ENCODE measurements at regions of chr7 and their contacts with region 1.

Region 1: DNA sequence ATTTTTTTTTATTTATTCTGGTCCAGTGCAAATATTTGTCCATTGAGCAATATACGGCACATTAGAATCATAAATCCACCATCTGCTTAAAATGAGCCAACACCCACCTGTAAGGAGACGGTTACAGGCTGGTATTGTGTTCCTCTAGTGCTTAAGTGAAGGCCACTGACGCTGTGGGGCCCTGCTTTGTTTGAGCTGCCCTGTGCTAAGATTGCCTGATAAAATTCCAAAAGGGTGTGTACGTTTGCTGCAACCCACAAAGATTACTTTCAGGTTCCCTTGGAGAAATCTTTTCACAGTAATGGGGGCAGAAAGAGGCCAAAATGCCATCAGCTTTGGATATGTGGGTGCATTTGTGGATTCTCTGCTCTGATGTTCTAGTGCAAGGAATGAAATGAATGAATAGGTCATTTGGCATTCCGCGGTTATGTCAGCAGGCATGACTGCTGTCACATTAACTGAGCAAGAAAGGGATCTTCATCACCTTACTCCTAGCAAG is 34.4 kb downstream of the AGR3 start:
- DNase-seq: peak; percentile 91 to 96
- H3K4me3 ChIP-seq: no peak overlapping the region
- H3K4me3 Mint-ChIP-seq: peak overlapping the region; percentile 64
- H3K27ac Mint-ChIP-seq: peak overlapping the region; percentile 86
- H3K4me1 ChIP-seq: peaks cover 48% of the 10 kb centered on the region
- H3K4me1 Mint-ChIP-seq: peaks cover 39% of the 10 kb centered on the region
- H3K27me3 ChIP-seq: no peaks in the 10 kb centered on the region
- H3K27me3 Mint-ChIP-seq: no peaks in the 10 kb centered on the region
- CTCF ChIP-seq: no peak

Region 2: GRCh38 chr7:16719699-16720098 is 127.7 kb before region 1 on chr7:
- CTCF ChIA-PET with region 1: no interaction called
- POLR2A ChIA-PET with region 1: no interaction called
- intact Hi-C with region 1: loop called (anchors 1 kb)
- DNase-seq: no peak
- H3K4me3 ChIP-seq: no peak overlapping the region
- H3K4me3 Mint-ChIP-seq: peak overlapping the region; percentile 46
- H3K27ac Mint-ChIP-seq: peak overlapping the region; percentile 93
- H3K4me1 ChIP-seq: peaks cover 30% of the 10 kb centered on the region
- H3K4me1 Mint-ChIP-seq: peaks cover 32% of the 10 kb centered on the region
- H3K27me3 ChIP-seq: no peaks in the 10 kb centered on the region
- H3K27me3 Mint-ChIP-seq: no peaks in the 10 kb centered on the region
- CTCF ChIP-seq: no peak

Region 3: GRCh38 chr7:16801111-16801542 is 46.3 kb before region 1 on chr7:
- CTCF ChIA-PET with region 1: interaction called, 8 read pairs
- POLR2A ChIA-PET with region 1: no interaction called
- intact Hi-C with region 1: loop called (anchors 1 kb)
- DNase-seq: peak in 1 of 2 experiments; percentile 44
- H3K4me3 ChIP-seq: no peak overlapping the region
- H3K4me3 Mint-ChIP-seq: peak overlapping the region; percentile 20
- H3K27ac Mint-ChIP-seq: peak overlapping the region; percentile 13
- H3K4me1 ChIP-seq: peaks cover 29% of the 10 kb centered on the region
- H3K4me1 Mint-ChIP-seq: peaks cover 16% of the 10 kb centered on the region
- H3K27me3 ChIP-seq: no peaks in the 10 kb centered on the region
- H3K27me3 Mint-ChIP-seq: no peaks in the 10 kb centered on the region
- CTCF ChIP-seq: peak in 1 of 2 experiments; percentile 54

Region 4: DNA sequence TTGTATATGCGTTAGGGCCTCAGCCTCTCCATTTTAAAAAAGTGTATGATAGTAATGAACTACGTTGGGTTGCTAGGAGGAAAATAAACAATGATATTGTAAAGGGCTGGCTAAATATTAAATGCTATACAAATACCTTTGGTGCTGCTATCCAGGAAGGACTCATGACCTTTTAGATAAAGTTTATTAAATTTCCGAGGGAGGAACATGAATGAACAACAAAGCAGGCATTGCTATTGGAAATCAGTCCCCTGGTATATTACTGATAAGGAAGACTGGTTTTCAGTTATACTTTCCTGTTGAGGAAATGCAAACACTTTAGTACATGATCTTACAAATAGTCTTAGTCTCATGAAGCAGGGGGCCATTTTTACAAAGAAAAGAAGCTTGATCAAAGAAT is 25.4 kb before region 1 on chr7:
- CTCF ChIA-PET with region 1: no interaction called
- POLR2A ChIA-PET with region 1: interaction called, 3 read pairs
- intact Hi-C with region 1: loop called (anchors 1 kb)
- DNase-seq: no peak
- H3K4me3 ChIP-seq: no peak overlapping the region
- H3K4me3 Mint-ChIP-seq: no peak overlapping the region
- H3K27ac Mint-ChIP-seq: peak overlapping the region; percentile 71
- H3K4me1 ChIP-seq: peaks cover 17% of the 10 kb centered on the region
- H3K4me1 Mint-ChIP-seq: peaks cover 26% of the 10 kb centered on the region
- H3K27me3 ChIP-seq: no peaks in the 10 kb centered on the region
- H3K27me3 Mint-ChIP-seq: no peaks in the 10 kb centered on the region
- CTCF ChIP-seq: no peak

Region 5: GRCh38 chr7:16891338-16891737 is 43.9 kb after region 1 on chr7:
- CTCF ChIA-PET with region 1: interaction called, 5 read pairs
- POLR2A ChIA-PET with region 1: interaction called, 3 read pairs
- intact Hi-C with region 1: loop called (anchors 2 kb)
- DNase-seq: peak; percentile 64 to 74
- H3K4me3 ChIP-seq: no peak overlapping the region
- H3K4me3 Mint-ChIP-seq: no peak overlapping the region
- H3K27ac Mint-ChIP-seq: peak overlapping the region; percentile 35
- H3K4me1 ChIP-seq: peaks cover 31% of the 10 kb centered on the region
- H3K4me1 Mint-ChIP-seq: peaks cover 14% of the 10 kb centered on the region
- H3K27me3 ChIP-seq: no peaks in the 10 kb centered on the region
- H3K27me3 Mint-ChIP-seq: no peaks in the 10 kb centered on the region
- CTCF ChIP-seq: peak; percentile 46 to 75

Region 6: GRCh38 chr7:16918288-16918895 is 71.0 kb after region 1 on chr7:
- CTCF ChIA-PET with region 1: no interaction called
- POLR2A ChIA-PET with region 1: no interaction called
- intact Hi-C with region 1: loop called (anchors 1 kb)
- DNase-seq: peak in 1 of 2 experiments; percentile 52
- H3K4me3 ChIP-seq: no peak overlapping the region
- H3K4me3 Mint-ChIP-seq: no peak overlapping the region
- H3K27ac Mint-ChIP-seq: peak overlapping the region; percentile 50
- H3K4me1 ChIP-seq: peaks cover 51% of the 10 kb centered on the region
- H3K4me1 Mint-ChIP-seq: peaks cover 38% of the 10 kb centered on the region
- H3K27me3 ChIP-seq: no peaks in the 10 kb centered on the region
- H3K27me3 Mint-ChIP-seq: no peaks in the 10 kb centered on the region
- CTCF ChIP-seq: peak; percentile 58 to 82

Measured in Caco-2 (cell line).